Gastrocnemius medialis (tissue), 4 donors: ENCODE measurements at regions of chr11 and their contacts with region 1.

Region 1: GRCh38 chr11:76207642-76208401 is 1.5 kb upstream of the WNT11 start:
- DNase-seq: peak; percentile 64 to 75
- ATAC-seq: peak; percentile 57
- H3K4me3 ChIP-seq: peak overlapping the region; percentile 64 to 94 (median 77)
- H3K27ac ChIP-seq: peak overlapping the region; percentile 84 to 90 (median 86)
- H3K4me1 ChIP-seq: peaks cover 7 to 23% of the 10 kb centered on the region in 2 donors
- H3K27me3 ChIP-seq: no peaks in the 10 kb centered on the region
- CTCF ChIP-seq: peak; percentile 90 to 99 (median 97)
- POLR2A ChIP-seq: no peak

Region 2: DNA sequence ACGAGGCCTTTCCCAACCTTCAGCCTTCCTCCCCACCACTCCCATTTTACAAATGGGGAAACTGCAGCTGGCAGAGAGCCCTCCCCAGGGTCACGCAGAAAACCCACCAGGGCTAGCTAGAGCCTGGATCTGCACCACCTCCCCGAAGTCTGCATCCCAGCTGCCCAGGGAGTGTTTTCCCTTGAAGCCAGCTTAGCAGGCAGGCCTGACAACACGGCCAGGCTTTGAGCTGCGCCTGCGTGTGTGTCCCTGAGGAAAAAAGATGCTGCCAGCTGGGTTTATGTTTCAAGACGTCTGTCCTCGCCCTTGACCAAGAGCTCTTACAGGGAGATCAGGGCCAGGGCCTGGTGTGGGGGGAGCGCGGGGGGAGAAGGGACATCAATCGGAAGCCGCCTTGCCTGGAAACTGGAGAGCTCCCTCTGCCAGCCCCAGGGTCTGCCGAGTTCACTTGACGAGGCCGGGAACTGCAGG is 21.9 kb before region 1 on chr11:
- in situ Hi-C with region 1: no loop called
- intact Hi-C with region 1: loop called (anchors 2 kb)
- DNase-seq: peak; percentile 78 to 95
- ATAC-seq: peak; percentile 92 to 93
- H3K4me3 ChIP-seq: peak overlapping the region in 3 of 4 donors; percentile 15 to 36 (median 26)
- H3K27ac ChIP-seq: peak overlapping the region; percentile 86 to 90 (median 90)
- H3K4me1 ChIP-seq: peaks cover 19 to 29% of the 10 kb centered on the region in 2 donors
- H3K27me3 ChIP-seq: no peaks in the 10 kb centered on the region
- CTCF ChIP-seq: no peak
- POLR2A ChIP-seq: no peak

Region 3: DNA sequence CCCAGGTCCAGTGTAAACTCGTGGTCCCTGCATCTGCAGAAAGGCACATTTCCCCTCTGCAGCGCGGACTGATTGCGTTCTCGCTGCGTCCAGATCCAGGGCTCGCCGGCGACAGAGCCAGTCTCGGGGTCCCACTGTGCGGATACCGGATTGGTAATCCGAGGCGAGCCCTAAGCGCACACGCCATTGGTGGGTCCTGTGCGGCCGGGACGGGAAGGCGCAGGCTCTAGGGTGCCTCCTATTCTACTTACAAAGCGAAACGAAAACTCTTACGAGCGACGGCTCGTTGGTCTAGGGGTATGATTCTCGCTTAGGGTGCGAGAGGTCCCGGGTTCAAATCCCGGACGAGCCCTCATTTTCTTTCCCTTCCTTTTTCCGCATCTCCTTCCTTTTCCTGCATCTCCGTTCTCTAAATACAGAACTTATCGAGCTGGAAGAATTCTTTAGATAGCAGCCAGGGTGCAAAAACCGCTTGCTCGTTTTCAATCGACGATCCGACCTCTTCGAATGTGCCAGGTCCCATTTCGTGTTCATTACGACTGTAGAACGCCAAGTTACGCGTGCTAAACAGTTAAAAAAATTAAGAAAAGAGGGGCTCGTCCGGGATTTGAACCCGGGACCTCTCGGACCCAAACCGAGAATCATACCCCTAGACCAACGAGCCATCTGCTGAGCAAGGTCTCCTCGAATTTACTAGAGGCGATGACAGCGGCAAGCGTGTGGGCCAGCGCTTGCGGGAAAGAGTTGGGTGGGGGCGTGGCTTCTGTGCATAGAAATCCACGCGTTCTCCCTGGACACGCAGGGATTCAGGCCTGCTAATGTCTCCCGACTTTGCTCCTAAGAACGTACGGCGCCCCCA is 27.6 kb after region 1 on chr11:
- in situ Hi-C with region 1: no loop called
- intact Hi-C with region 1: loop called (anchors 1 kb)
- DNase-seq: peak; percentile 78 to 83
- ATAC-seq: peak; percentile 83
- H3K4me3 ChIP-seq: peak overlapping the region; percentile 68 to 93 (median 87)
- H3K27ac ChIP-seq: peak overlapping the region; percentile 81 to 91 (median 84)
- H3K4me1 ChIP-seq: peaks cover 0 to 16% of the 10 kb centered on the region in 2 donors
- H3K27me3 ChIP-seq: no peaks in the 10 kb centered on the region
- CTCF ChIP-seq: no peak
- POLR2A ChIP-seq: peak in 1 of 2 donors; percentile 17

Region 4: DNA sequence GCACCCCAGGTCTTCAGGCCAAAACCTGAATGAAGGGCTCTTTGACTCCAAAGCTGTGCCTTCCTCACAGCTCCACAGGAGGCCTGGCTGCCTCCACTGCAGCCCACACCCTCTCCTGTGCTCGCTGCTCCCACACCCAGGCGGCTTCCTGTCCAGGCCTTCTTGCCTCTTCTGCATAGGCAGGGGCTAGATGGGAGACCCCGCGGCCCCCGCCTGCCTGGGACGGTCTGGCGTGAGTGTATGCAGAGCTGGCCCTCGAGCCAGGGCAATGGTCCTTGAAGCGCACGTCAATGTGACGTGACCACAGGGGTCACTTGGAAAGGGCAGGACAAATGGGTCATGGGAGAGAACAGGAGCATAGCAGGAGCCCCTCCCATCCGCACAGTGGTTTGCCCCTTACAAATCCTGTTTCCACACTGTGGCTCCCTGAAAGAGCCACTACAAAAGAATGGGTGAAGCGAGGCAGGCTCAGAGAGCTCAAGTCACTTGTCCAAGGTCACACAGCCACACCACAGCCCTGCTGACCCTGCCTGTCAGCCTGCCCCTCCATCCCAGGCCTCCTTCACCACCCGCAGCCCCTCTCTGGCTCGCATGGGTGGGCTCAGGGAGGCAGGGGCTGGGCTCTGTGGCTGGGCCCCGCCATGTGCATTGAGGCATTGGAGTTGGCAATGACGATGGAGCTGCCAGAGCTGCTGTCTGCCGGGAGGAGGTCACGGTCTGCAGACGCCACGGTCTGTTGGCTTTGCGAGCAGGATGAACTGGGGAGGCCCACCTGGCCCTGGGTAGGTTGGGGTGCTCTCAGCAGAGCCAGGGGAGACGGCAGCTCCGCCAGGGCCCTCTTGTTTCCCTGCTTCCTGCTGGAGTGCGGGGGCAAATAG is 69.7 kb after region 1 on chr11:
- in situ Hi-C with region 1: no loop called
- intact Hi-C with region 1: no loop called
- DNase-seq: no peak
- ATAC-seq: no peak
- H3K4me3 ChIP-seq: no peak overlapping the region
- H3K27ac ChIP-seq: no peak overlapping the region
- H3K4me1 ChIP-seq: no peaks in the 10 kb centered on the region
- H3K27me3 ChIP-seq: no peaks in the 10 kb centered on the region
- CTCF ChIP-seq: no peak
- POLR2A ChIP-seq: no peak

Region 5: GRCh38 chr11:76380967-76381719 is 173.3 kb after region 1 on chr11 and contains the starts of genes GVQW3 and THAP12:
- in situ Hi-C with region 1: no loop called
- intact Hi-C with region 1: loop called (anchors 1 kb)
- DNase-seq: peak; percentile 96 to 98
- ATAC-seq: peak; percentile 95
- H3K4me3 ChIP-seq: peak within 1 kb of the TSS; percentile 64 to 92 (median 75)
- H3K27ac ChIP-seq: peak within 1 kb of the TSS; percentile 72 to 90 (median 83)
- H3K4me1 ChIP-seq: peaks cover 35 to 36% of the 10 kb centered on the region in 2 donors
- H3K27me3 ChIP-seq: no peaks in the 10 kb centered on the region
- CTCF ChIP-seq: peak in 1 of 5 experiments; percentile 18
- POLR2A ChIP-seq: peak; percentile 81 to 92
- total RNA-seq, gene GVQW3: 0.07 to 0.70 (median 0.33) TPM
- total RNA-seq, gene THAP12: 24.5 to 35.3 (median 30.2) TPM

Region 6: DNA sequence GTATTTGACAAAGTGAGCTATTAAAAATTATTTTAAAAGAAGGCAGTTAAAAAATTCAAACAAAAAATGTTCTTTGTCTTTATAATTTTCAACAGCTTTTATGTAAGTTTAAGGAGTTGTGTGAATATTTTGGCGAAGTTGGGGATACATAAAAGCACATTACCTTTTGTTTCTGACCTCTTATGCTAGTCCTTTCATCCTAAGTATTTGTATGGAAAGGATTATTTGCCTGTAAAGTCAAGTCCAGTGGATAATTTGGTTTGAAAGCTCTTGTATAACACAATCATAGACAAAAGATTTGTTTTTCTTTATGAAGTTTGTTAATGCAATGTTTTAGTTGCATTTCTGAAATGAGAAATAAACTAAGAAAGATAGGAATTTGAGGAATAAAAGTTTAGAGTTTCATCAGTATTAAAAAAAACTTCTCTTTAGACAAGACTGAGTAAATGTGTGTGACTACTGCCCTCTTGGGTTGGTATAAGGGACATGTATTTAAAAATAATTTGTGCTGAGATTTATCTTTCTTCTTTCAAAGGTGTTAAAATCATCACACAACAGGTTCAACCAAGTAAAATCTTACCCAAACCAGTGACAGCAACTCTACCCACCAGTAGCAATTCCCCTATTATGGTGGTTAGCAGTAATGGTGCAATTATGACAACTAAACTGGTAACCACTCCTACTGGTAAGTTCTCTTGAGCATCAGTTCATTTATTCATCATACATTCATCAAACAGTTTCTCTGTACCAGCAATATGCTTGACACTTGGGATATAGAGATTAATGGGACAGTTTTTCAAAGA is 305.2 kb after region 1 on chr11:
- in situ Hi-C with region 1: no loop called
- intact Hi-C with region 1: loop called (anchors 10 kb)
- DNase-seq: no peak
- ATAC-seq: no peak
- H3K4me3 ChIP-seq: no peak overlapping the region
- H3K27ac ChIP-seq: no peak overlapping the region
- H3K4me1 ChIP-seq: peaks cover 6% of the 10 kb centered on the region in 2 donors
- H3K27me3 ChIP-seq: no peaks in the 10 kb centered on the region
- CTCF ChIP-seq: peak in 1 of 5 experiments; percentile 22
- POLR2A ChIP-seq: no peak